Aorta (tissue), 5 donors: ENCODE measurements at regions of chr3 and their contacts with region 1.

Region 1: GRCh38 chr3:11662402-11662990 is 18.8 kb upstream of the VGLL4 start:
- DNase-seq: no peak
- ATAC-seq: no peak
- H3K4me3 ChIP-seq: no peak overlapping the region
- H3K27ac ChIP-seq: peak overlapping the region in 1 of 2 donors; percentile 28
- H3K4me1 ChIP-seq: peaks cover 2 to 5% of the 10 kb centered on the region in 2 donors
- H3K27me3 ChIP-seq: no peaks in the 10 kb centered on the region

Region 2: GRCh38 chr3:11226042-11226370 is 436.5 kb before region 1 on chr3:
- intact Hi-C with region 1: no loop called
- DNase-seq: no peak
- ATAC-seq: no peak
- H3K4me3 ChIP-seq: no peak overlapping the region
- H3K27ac ChIP-seq: peak overlapping the region; percentile 30 to 47
- H3K4me1 ChIP-seq: peaks cover 0 to 2% of the 10 kb centered on the region in 2 donors
- H3K27me3 ChIP-seq: no peaks in the 10 kb centered on the region

Region 3: GRCh38 chr3:11415099-11415498 is 247.4 kb before region 1 on chr3:
- intact Hi-C with region 1: no loop called
- DNase-seq: no peak
- ATAC-seq: no peak
- H3K4me3 ChIP-seq: no peak overlapping the region
- H3K27ac ChIP-seq: no peak overlapping the region
- H3K4me1 ChIP-seq: no peaks in the 10 kb centered on the region
- H3K27me3 ChIP-seq: no peaks in the 10 kb centered on the region

Region 4: GRCh38 chr3:11719406-11720230 is 57.1 kb after region 1 on chr3:
- intact Hi-C with region 1: loop called (anchors 5 kb)
- DNase-seq: peak; percentile 84 to 91
- ATAC-seq: peak; percentile 77
- H3K4me3 ChIP-seq: peak overlapping the region; percentile 73 to 83
- H3K27ac ChIP-seq: peak overlapping the region; percentile 87 to 94
- H3K4me1 ChIP-seq: peaks cover 0 to 7% of the 10 kb centered on the region in 2 donors
- H3K27me3 ChIP-seq: no peaks in the 10 kb centered on the region

Region 5: GRCh38 chr3:11803977-11804892 is 141.7 kb after region 1 on chr3:
- intact Hi-C with region 1: loop called (anchors 5 to 10 kb)
- DNase-seq: peak in 1 of 2 donors; percentile 60
- ATAC-seq: peak; percentile 83
- H3K4me3 ChIP-seq: no peak overlapping the region
- H3K27ac ChIP-seq: no peak overlapping the region
- H3K4me1 ChIP-seq: no peaks in the 10 kb centered on the region
- H3K27me3 ChIP-seq: no peaks in the 10 kb centered on the region